CD8-positive, alpha-beta T cell (primary cell): ENCODE measurements at regions of chr11 and their contacts with region 1.

Region 1: GRCh38 chr11:9757809-9758636 is 94.1 kb downstream of the SWAP70 start:
- DNase-seq: peak; percentile 80 to 96 (median 92)
- ATAC-seq: peak; percentile 81
- H3K4me3 ChIP-seq: peak overlapping the region; percentile 83 to 91
- H3K4me3 Mint-ChIP-seq: peak overlapping the region; percentile 83
- H3K27ac ChIP-seq: peak overlapping the region; percentile 36 to 42
- H3K27ac Mint-ChIP-seq: peak overlapping the region; percentile 90
- H3K4me1 ChIP-seq: peaks cover 12% of the 10 kb centered on the region
- H3K4me1 Mint-ChIP-seq: peaks cover 24% of the 10 kb centered on the region
- H3K27me3 ChIP-seq: no peaks in the 10 kb centered on the region
- H3K27me3 Mint-ChIP-seq: no peaks in the 10 kb centered on the region
- CTCF ChIP-seq: peak; percentile 84

Region 2: GRCh38 chr11:9314291-9315036 is 443.6 kb before region 1 on chr11 and contains the start of gene TMEM41B:
- CTCF ChIA-PET with region 1: no interaction called
- POLR2A ChIA-PET with region 1: no interaction called
- intact Hi-C with region 1: loop called in 1 of 2 experiments (anchors 2 kb)
- DNase-seq: peak; percentile 98 to 100 (median 100)
- ATAC-seq: peak; percentile 96
- H3K4me3 ChIP-seq: peak within 1 kb of the TSS; percentile 85 to 99
- H3K4me3 Mint-ChIP-seq: peak within 1 kb of the TSS; percentile 98
- H3K27ac ChIP-seq: peak within 1 kb of the TSS; percentile 87 to 97
- H3K27ac Mint-ChIP-seq: peak within 1 kb of the TSS; percentile 98
- H3K4me1 ChIP-seq: peaks cover 29% of the 10 kb centered on the region
- H3K4me1 Mint-ChIP-seq: peaks cover 35% of the 10 kb centered on the region
- H3K27me3 ChIP-seq: no peaks in the 10 kb centered on the region
- H3K27me3 Mint-ChIP-seq: peaks cover 2% of the 10 kb centered on the region
- CTCF ChIP-seq: no peak
- total RNA-seq, gene TMEM41B: 36.8 TPM

Region 3: GRCh38 chr11:9613118-9613829 is 144.7 kb before region 1 on chr11:
- CTCF ChIA-PET with region 1: interaction called, 6 read pairs
- POLR2A ChIA-PET with region 1: no interaction called
- intact Hi-C with region 1: loop called in 1 of 2 experiments (anchors 1 kb)
- DNase-seq: peak; percentile 70 to 90 (median 84)
- ATAC-seq: peak; percentile 49
- H3K4me3 ChIP-seq: peak overlapping the region; percentile 69 to 70
- H3K4me3 Mint-ChIP-seq: peak overlapping the region; percentile 97
- H3K27ac ChIP-seq: peak overlapping the region; percentile 49 to 88
- H3K27ac Mint-ChIP-seq: peak overlapping the region; percentile 94
- H3K4me1 ChIP-seq: peaks cover 12% of the 10 kb centered on the region
- H3K4me1 Mint-ChIP-seq: peaks cover 16% of the 10 kb centered on the region
- H3K27me3 ChIP-seq: no peaks in the 10 kb centered on the region
- H3K27me3 Mint-ChIP-seq: no peaks in the 10 kb centered on the region
- CTCF ChIP-seq: peak; percentile 79

Region 4: GRCh38 chr11:9796854-9797253 is 38.8 kb after region 1 on chr11:
- CTCF ChIA-PET with region 1: no interaction called
- POLR2A ChIA-PET with region 1: no interaction called
- intact Hi-C with region 1: no loop called
- DNase-seq: no peak
- ATAC-seq: no peak
- H3K4me3 ChIP-seq: no peak overlapping the region
- H3K4me3 Mint-ChIP-seq: no peak overlapping the region
- H3K27ac ChIP-seq: no peak overlapping the region
- H3K27ac Mint-ChIP-seq: no peak overlapping the region
- H3K4me1 ChIP-seq: no peaks in the 10 kb centered on the region
- H3K4me1 Mint-ChIP-seq: no peaks in the 10 kb centered on the region
- H3K27me3 ChIP-seq: no peaks in the 10 kb centered on the region
- H3K27me3 Mint-ChIP-seq: no peaks in the 10 kb centered on the region
- CTCF ChIP-seq: no peak

Region 5: DNA sequence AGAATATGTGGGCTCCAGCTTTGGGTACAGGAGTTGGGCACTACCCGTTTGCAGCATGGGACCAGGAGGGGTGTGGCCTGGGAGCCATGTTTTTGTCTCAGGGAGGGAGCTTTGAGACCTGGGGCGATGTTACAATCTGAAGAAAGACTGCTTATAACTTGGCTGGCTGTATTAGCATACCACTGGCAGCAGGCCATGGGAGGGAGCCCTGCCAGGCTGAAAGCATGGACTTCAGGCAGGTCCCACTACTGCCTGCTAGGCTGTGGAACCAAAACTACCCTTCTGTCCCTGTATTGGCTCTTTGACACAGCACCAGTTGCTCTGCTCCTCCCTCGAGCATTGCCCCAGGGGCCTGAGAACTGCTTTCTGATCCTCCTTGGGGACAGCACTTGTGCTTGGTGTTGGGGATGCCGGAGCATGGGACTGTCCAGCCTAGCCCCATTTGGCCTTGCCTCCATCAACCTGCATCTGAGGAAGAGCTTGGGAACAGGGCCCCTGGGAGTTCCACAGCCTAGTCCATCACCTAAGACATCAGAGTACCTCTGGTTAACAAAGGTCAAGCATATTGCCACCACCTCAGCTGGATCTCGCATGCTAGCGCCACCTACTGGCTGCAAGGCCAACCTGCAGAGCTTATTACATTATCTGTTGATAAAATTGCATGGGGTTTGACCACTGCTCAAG is 318.6 kb after region 1 on chr11:
- CTCF ChIA-PET with region 1: interaction called, 3 read pairs
- POLR2A ChIA-PET with region 1: no interaction called
- intact Hi-C with region 1: loop called in 1 of 2 experiments (anchors 5 kb)
- DNase-seq: peak in 3 of 9 experiments; percentile 23 to 39 (median 28)
- ATAC-seq: no peak
- H3K4me3 ChIP-seq: no peak overlapping the region
- H3K4me3 Mint-ChIP-seq: no peak overlapping the region
- H3K27ac ChIP-seq: no peak overlapping the region
- H3K27ac Mint-ChIP-seq: no peak overlapping the region
- H3K4me1 ChIP-seq: no peaks in the 10 kb centered on the region
- H3K4me1 Mint-ChIP-seq: no peaks in the 10 kb centered on the region
- H3K27me3 ChIP-seq: no peaks in the 10 kb centered on the region
- H3K27me3 Mint-ChIP-seq: no peaks in the 10 kb centered on the region
- CTCF ChIP-seq: no peak

Region 6: DNA sequence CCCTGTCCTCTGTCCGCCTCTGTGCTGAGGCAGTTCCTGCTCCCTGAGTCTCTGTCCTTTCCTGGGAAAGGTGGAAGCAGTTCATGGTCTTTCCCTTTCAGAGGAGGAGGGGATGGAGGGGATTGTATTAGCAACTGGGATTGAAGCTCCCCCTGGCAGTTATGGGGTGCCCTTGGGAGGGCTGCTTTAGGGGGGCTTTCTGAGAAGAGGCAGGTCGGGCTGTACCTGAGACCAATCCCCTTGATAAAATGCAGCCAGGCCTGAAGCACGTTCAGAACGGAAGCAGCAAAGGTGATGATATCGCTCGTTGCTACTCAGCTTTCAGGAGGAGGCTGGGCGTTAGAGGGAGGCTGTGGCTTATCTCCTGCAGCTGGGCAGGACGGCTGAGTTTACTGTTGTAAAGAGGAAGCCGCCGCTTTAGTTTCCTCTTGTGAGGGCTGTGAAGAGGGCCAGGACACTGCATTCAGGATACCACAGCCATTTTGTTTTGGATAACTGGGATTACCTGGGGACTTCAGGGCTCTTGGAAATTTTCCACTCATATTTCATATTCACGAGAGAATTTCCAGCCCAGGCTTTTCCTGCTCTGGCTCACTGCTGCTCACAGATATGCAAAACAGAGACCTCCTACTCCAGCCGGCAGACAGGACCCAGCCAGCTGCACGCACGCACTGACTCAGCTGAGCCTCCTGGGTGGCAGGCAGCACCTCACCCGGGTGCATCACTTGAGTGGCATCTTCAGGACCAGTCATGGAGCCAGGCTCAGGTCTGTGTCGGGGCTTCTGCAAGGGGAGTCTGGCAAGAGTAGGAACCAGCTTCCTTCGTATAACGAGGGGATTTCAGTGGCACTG is 697.8 kb after region 1 on chr11:
- CTCF ChIA-PET with region 1: no interaction called
- POLR2A ChIA-PET with region 1: no interaction called
- intact Hi-C with region 1: loop called in 1 of 2 experiments (anchors 1 kb)
- DNase-seq: peak; percentile 30 to 87 (median 74)
- ATAC-seq: peak; percentile 74
- H3K4me3 ChIP-seq: peak overlapping the region; percentile 52 to 54
- H3K4me3 Mint-ChIP-seq: peak overlapping the region; percentile 91
- H3K27ac ChIP-seq: peak overlapping the region; percentile 10 to 67
- H3K27ac Mint-ChIP-seq: peak overlapping the region; percentile 98
- H3K4me1 ChIP-seq: peaks cover 58% of the 10 kb centered on the region
- H3K4me1 Mint-ChIP-seq: peaks cover 81% of the 10 kb centered on the region
- H3K27me3 ChIP-seq: no peaks in the 10 kb centered on the region
- H3K27me3 Mint-ChIP-seq: no peaks in the 10 kb centered on the region
- CTCF ChIP-seq: no peak